Calu3 (cell line): ENCODE measurements at regions of chr4 and their contacts with region 1.

Region 1: GRCh38 chr4:69823481-69824186 is 36.3 kb downstream of the SULT1E1 start:
- DNase-seq: peak; percentile 70
- H3K4me3 Mint-ChIP-seq: no peak overlapping the region
- H3K27ac Mint-ChIP-seq: peak overlapping the region; percentile 16
- H3K4me1 Mint-ChIP-seq: no peaks in the 10 kb centered on the region
- H3K27me3 Mint-ChIP-seq: no peaks in the 10 kb centered on the region
- CTCF ChIP-seq: no peak

Region 2: DNA sequence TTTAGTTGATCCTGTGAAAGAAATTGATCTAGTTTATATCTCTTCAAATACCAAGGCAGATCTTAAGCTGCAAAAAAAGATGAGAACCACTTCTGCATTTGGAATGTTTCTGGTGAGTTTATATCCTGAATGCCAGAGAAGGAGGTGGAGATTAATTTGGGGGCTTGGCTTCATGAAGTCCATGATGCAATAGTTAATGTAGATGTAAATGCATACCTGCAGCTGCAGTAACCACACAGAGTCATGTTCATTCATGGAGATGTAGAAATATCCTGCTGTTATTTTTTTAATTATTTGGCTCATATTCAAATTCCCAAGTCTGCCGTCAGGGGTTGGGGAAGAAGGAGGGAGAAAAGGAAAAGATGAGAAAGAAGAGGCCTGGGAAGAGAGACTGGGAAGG is 36.4 kb after region 1 on chr4 and contains the start of gene SULT1E1:
- CTCF ChIA-PET with region 1: no interaction called
- intact Hi-C with region 1: no loop called
- DNase-seq: peak; percentile 4
- H3K4me3 Mint-ChIP-seq: no peak within 1 kb of the TSS
- H3K27ac Mint-ChIP-seq: no peak within 1 kb of the TSS
- H3K4me1 Mint-ChIP-seq: no peaks in the 10 kb centered on the region
- H3K27me3 Mint-ChIP-seq: no peaks in the 10 kb centered on the region
- CTCF ChIP-seq: no peak
- total RNA-seq, gene SULT1E1: 1.9 and 2.4 TPM in 2 replicates

Region 3: GRCh38 chr4:69881173-69881773 is 57.6 kb after region 1 on chr4:
- CTCF ChIA-PET with region 1: interaction called, 6 read pairs
- intact Hi-C with region 1: loop called (anchors 1 kb)
- DNase-seq: peak; percentile 6
- H3K4me3 Mint-ChIP-seq: no peak overlapping the region
- H3K27ac Mint-ChIP-seq: no peak overlapping the region
- H3K4me1 Mint-ChIP-seq: peaks cover 22% of the 10 kb centered on the region
- H3K27me3 Mint-ChIP-seq: no peaks in the 10 kb centered on the region
- CTCF ChIP-seq: peak; percentile 61